Caco-2 (cell line): ENCODE measurements at regions of chr11 and their contacts with region 1.

Region 1: GRCh38 chr11:75223954-75224643 is 16.5 kb upstream of the TPBGL start:
- DNase-seq: peak in 1 of 2 experiments; percentile 55
- H3K4me3 ChIP-seq: no peak overlapping the region
- H3K4me3 Mint-ChIP-seq: no peak overlapping the region
- H3K27ac Mint-ChIP-seq: no peak overlapping the region
- H3K4me1 ChIP-seq: no peaks in the 10 kb centered on the region
- H3K4me1 Mint-ChIP-seq: no peaks in the 10 kb centered on the region
- H3K27me3 ChIP-seq: no peaks in the 10 kb centered on the region
- H3K27me3 Mint-ChIP-seq: no peaks in the 10 kb centered on the region
- CTCF ChIP-seq: peak; percentile 30 to 54

Region 2: DNA sequence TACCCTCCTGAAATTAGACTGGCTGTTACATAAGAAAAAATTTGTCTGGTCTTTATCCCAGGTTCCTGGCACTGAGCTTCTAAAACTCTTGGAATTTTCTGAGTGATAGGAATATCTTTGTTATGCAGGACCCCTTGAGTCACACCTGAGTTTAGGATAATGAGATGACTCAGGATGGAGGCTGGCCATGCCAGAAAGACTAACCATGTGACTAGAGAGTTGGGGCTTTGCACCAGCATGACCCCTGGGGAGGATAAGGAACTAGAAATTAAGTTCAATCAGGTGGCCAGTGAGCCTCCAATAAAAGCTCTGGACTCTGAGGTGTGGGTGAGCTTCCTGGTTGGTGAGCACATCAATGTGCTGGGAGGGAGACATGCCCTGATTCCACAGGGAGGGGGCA is 363.4 kb before region 1 on chr11:
- CTCF ChIA-PET with region 1: no interaction called
- POLR2A ChIA-PET with region 1: no interaction called
- intact Hi-C with region 1: no loop called
- DNase-seq: no peak
- H3K4me3 ChIP-seq: no peak overlapping the region
- H3K4me3 Mint-ChIP-seq: no peak overlapping the region
- H3K27ac Mint-ChIP-seq: no peak overlapping the region
- H3K4me1 ChIP-seq: no peaks in the 10 kb centered on the region
- H3K4me1 Mint-ChIP-seq: no peaks in the 10 kb centered on the region
- H3K27me3 ChIP-seq: no peaks in the 10 kb centered on the region
- H3K27me3 Mint-ChIP-seq: no peaks in the 10 kb centered on the region
- CTCF ChIP-seq: no peak

Region 3: DNA sequence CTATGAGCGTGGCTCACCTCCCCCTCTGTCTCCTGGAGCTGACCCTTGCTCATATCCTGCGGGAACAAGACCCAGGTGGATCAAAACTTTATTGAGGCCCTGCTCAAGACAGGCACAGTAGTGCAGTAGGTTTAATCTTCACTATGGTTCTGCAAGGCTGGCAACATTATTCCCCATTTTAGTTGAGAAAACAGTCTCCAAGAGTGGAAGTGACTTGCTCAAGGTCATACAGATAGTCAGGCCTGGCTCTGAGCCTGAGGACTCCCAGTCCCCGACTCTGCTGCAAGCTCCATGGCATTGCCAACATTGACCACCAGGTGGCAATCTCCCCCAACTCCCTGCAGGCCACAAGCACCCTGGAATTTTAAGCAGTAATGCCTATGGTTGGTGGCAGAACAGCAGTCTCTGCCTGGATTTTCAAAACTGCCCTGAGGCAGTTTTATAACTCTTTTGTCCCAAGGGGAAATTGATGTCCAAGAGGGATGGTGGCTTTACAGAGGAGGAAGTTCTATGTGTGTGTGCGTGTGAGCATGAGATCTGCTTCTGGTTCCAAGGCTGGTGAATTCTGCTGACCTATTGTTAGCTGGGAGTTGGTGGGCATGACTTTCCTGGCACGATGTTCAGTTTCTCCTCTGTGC is 201.2 kb before region 1 on chr11:
- CTCF ChIA-PET with region 1: interaction called, 10 read pairs
- POLR2A ChIA-PET with region 1: no interaction called
- intact Hi-C with region 1: no loop called
- DNase-seq: peak; percentile 89 to 93
- H3K4me3 ChIP-seq: no peak overlapping the region
- H3K4me3 Mint-ChIP-seq: no peak overlapping the region
- H3K27ac Mint-ChIP-seq: no peak overlapping the region
- H3K4me1 ChIP-seq: no peaks in the 10 kb centered on the region
- H3K4me1 Mint-ChIP-seq: no peaks in the 10 kb centered on the region
- H3K27me3 ChIP-seq: no peaks in the 10 kb centered on the region
- H3K27me3 Mint-ChIP-seq: no peaks in the 10 kb centered on the region
- CTCF ChIP-seq: peak; percentile 99 to 100

Region 4: GRCh38 chr11:75100314-75100713 is 123.8 kb before region 1 on chr11:
- CTCF ChIA-PET with region 1: no interaction called
- POLR2A ChIA-PET with region 1: no interaction called
- intact Hi-C with region 1: no loop called
- DNase-seq: no peak
- H3K4me3 ChIP-seq: no peak overlapping the region
- H3K4me3 Mint-ChIP-seq: no peak overlapping the region
- H3K27ac Mint-ChIP-seq: no peak overlapping the region
- H3K4me1 ChIP-seq: no peaks in the 10 kb centered on the region
- H3K4me1 Mint-ChIP-seq: no peaks in the 10 kb centered on the region
- H3K27me3 ChIP-seq: no peaks in the 10 kb centered on the region
- H3K27me3 Mint-ChIP-seq: peaks cover 11% of the 10 kb centered on the region
- CTCF ChIP-seq: no peak